ENCODE measurements at regions of chr14 and their contacts with region 1.

Region 1: DNA sequence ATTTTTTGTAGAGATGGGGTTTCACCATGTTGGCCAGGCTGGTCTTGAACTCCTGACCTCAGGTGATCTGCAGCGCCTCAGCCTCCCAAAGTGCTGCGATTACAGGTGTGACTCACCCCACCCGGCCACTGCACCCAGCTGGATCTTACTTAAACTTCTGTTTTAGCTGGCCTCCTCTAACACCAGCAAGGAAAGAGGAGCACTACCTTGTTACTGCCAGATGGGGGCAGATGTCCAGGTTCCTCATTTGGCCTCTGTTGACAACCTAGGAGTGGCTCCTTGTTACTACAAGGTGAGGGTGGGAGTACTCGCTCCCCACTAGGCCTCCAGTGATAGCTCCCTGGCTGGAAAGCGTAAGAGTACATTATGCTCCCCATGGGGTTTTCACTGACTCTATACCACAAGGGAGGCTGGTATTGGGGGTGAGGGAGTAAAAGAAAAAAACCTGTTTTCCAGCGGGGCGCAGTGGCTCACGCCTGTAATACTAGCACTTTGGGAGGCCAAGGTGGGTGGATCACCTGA is 13.1 kb upstream of the ARF6 start:
- DNase-seq: no peak
- ATAC-seq: peak; percentile 85

Region 2: DNA sequence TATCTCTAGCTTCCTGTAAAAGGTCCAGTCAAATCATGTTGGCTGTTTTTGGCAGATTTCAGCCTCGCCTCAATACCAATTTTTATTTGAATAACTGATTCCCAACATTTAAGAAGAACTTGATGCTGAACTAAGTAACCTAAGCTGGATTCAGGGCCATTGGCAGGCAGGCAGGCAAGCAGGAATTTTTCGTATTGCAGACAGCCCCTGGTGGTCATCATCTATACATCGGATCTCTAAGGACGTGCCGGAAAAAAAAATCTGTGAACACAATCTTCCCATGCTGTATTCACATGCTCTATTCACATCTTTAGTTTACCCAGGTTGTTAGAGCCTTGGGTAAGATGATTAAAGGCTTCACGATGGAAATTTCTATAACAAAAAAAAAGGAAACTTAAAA is 229.6 kb after region 1 on chr14:
- intact Hi-C with region 1: loop called (anchors 10 kb)
- DNase-seq: no peak
- ATAC-seq: no peak